ENCODE measurements at regions of chr17 and their contacts with region 1.

Region 1: DNA sequence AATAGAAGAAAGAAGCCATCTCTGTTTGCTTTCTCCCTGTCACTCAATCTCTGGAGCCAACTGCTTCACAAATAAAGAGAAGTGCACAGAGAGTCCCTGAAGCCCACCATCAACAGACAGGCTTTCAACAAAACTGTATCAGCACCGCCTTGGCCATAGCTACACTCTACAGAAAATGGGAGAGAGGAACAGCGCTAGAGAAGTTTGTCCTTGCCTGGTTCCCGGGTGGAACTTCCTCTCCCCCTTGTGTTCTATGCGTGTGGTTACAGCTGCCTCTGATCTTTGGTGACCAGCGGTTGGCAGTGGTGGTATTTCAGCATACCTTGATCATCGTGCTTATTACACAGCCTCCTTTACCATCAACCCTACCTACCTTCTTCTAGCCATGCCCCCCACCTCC is 91.4 kb upstream of the CCL2 start:
- DNase-seq: no peak
- H3K4me3 ChIP-seq: no peak overlapping the region
- H3K27ac ChIP-seq: no peak overlapping the region
- H3K4me1 ChIP-seq: no peaks in the 10 kb centered on the region
- H3K27me3 ChIP-seq: no peaks in the 10 kb centered on the region
- CTCF ChIP-seq: peak in 1 of 3 experiments; percentile 34

Region 2: DNA sequence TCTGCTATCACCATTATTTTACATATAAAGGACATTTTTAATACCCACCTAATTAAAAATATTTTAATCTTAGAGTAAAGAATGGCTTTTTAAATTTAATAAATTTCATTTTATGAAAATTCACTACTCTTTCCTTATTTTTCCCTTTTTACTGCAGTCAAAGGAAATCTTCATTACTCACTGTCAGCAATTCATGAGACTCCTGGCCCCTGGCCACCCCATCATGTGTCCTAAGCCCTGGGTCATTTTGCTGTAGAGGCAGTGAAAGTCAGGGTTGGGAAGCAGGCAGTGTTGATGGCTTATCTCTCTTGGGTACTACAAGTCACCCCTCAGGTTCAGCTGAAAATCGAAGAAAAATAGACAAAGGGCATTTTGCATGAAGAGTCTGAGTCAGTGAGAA is 377.2 kb before region 1 on chr17:
- intact Hi-C with region 1: loop called (anchors 10 kb)
- DNase-seq: no peak
- H3K4me3 ChIP-seq: no peak overlapping the region
- H3K27ac ChIP-seq: no peak overlapping the region
- H3K4me1 ChIP-seq: no peaks in the 10 kb centered on the region
- H3K27me3 ChIP-seq: no peaks in the 10 kb centered on the region
- CTCF ChIP-seq: no peak

Region 3: GRCh38 chr17:34252444-34253138 is 88.9 kb after region 1 on chr17:
- intact Hi-C with region 1: no loop called
- DNase-seq: peak; percentile 62 to 97
- H3K4me3 ChIP-seq: peak overlapping the region in 1 of 2 donors; percentile 8
- H3K27ac ChIP-seq: peak overlapping the region; percentile 87 to 89
- H3K4me1 ChIP-seq: peaks cover 53 to 81% of the 10 kb centered on the region in 2 donors
- H3K27me3 ChIP-seq: no peaks in the 10 kb centered on the region
- CTCF ChIP-seq: no peak